ENCODE measurements at regions of chr3 and their contacts with region 1.

Region 1: GRCh38 chr3:49171119-49171774 is at the start of gene KLHDC8B:
- DNase-seq: no peak
- ATAC-seq: peak; percentile 90
- H3K4me3 ChIP-seq: peak within 1 kb of the TSS; percentile 57 to 63
- H3K27ac ChIP-seq: peak within 1 kb of the TSS; percentile 76
- H3K4me1 ChIP-seq: peaks cover 6% of the 10 kb centered on the region
- H3K27me3 ChIP-seq: no peaks in the 10 kb centered on the region
- CTCF ChIP-seq: peak; percentile 94
- total RNA-seq, gene KLHDC8B: 6.8 TPM

Region 2: GRCh38 chr3:49108346-49108745 is 62.9 kb before region 1 on chr3:
- CTCF ChIA-PET with region 1: no interaction called
- POLR2A ChIA-PET with region 1: no interaction called
- in situ Hi-C with region 1: no loop called
- intact Hi-C with region 1: no loop called
- DNase-seq: no peak
- ATAC-seq: no peak
- H3K4me3 ChIP-seq: no peak overlapping the region
- H3K27ac ChIP-seq: no peak overlapping the region
- H3K4me1 ChIP-seq: peaks cover 7% of the 10 kb centered on the region; the same call in 1 of the 2 replicates
- H3K27me3 ChIP-seq: no peaks in the 10 kb centered on the region
- CTCF ChIP-seq: no peak

Region 3: GRCh38 chr3:49120096-49120437 is 51.2 kb before region 1 on chr3:
- CTCF ChIA-PET with region 1: no interaction called
- POLR2A ChIA-PET with region 1: no interaction called
- in situ Hi-C with region 1: no loop called
- intact Hi-C with region 1: no loop called
- DNase-seq: no peak
- ATAC-seq: no peak
- H3K4me3 ChIP-seq: peak overlapping the region; percentile 83 to 85
- H3K27ac ChIP-seq: peak overlapping the region; percentile 92
- H3K4me1 ChIP-seq: peaks cover 8% of the 10 kb centered on the region
- H3K27me3 ChIP-seq: no peaks in the 10 kb centered on the region
- CTCF ChIP-seq: no peak

Region 4: DNA sequence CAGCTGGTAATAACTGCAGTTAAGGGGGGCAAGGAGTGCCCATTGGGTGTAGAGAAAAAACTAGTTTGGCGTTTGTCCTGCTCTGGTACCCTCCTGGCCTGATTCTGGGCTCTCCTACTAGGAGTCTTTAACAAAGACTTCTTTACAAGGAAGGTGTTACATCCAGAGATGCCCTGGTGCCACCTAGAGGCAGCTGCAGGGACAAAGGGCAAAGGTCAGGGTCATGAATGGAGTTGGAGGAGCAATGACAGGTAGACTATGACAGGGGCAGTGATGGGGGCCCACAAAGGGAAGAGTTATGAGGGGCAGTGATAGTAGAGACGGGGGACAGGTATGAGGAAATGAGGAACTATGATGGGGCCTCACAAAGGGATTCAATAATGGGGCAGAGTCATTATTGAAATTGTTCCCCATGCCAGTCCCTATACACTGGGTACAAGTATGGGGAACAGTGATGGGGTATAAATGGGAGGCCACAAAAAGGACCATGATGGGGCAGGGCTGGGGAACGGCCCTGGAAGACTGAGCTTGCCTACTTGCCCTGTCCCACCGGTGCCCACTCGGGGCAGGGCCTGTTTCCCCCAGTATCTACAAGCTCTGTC is 13.0 kb before region 1 on chr3:
- CTCF ChIA-PET with region 1: interaction called, 10 read pairs
- POLR2A ChIA-PET with region 1: no interaction called
- in situ Hi-C with region 1: no loop called
- intact Hi-C with region 1: no loop called
- DNase-seq: no peak
- ATAC-seq: peak; percentile 79
- H3K4me3 ChIP-seq: no peak overlapping the region
- H3K27ac ChIP-seq: no peak overlapping the region
- H3K4me1 ChIP-seq: no peaks in the 10 kb centered on the region
- H3K27me3 ChIP-seq: no peaks in the 10 kb centered on the region
- CTCF ChIP-seq: peak; percentile 80

Region 5: DNA sequence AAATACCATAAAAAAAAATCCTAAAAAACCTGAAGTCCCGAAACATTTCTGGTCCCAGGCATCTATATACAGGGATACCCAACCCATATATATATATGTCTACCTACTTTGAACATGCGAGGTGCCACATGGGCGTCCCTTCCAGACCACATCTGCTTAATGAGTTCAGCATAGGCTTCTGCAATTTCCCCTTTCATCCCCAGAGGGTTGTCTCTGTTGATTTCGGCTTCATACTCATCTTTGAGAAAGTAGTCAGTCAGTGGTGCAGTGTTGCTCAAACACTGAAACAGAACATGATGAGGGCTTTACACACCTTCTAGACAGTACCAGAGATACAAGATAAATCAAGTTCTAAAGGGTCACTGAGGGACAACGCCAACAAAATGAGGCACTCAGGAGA is 134.4 kb after region 1 on chr3:
- CTCF ChIA-PET with region 1: interaction called, 10 read pairs
- POLR2A ChIA-PET with region 1: no interaction called
- in situ Hi-C with region 1: no loop called
- intact Hi-C with region 1: no loop called
- DNase-seq: no peak
- ATAC-seq: no peak
- H3K4me3 ChIP-seq: no peak overlapping the region
- H3K27ac ChIP-seq: no peak overlapping the region
- H3K4me1 ChIP-seq: no peaks in the 10 kb centered on the region
- H3K27me3 ChIP-seq: no peaks in the 10 kb centered on the region
- CTCF ChIP-seq: no peak

Region 6: GRCh38 chr3:50208677-50209344 is 1037.6 kb after region 1 on chr3:
- CTCF ChIA-PET with region 1: no interaction called
- POLR2A ChIA-PET with region 1: interaction called, 10 read pairs
- in situ Hi-C with region 1: no loop called
- intact Hi-C with region 1: no loop called
- DNase-seq: no peak
- ATAC-seq: no peak
- H3K4me3 ChIP-seq: no peak overlapping the region
- H3K27ac ChIP-seq: no peak overlapping the region
- H3K4me1 ChIP-seq: no peaks in the 10 kb centered on the region; the same call in 1 of the 2 replicates
- H3K27me3 ChIP-seq: no peaks in the 10 kb centered on the region
- CTCF ChIP-seq: no peak

Measured in Panc1 (cell line).